AG04449 (cell line): ENCODE measurements at regions of chr11 and their contacts with region 1.

Region 1: GRCh38 chr11:101456812-101457211 is 127.0 kb downstream of the TRPC6 start:
- DNase-seq: no peak
- H3K4me3 ChIP-seq: no peak overlapping the region
- CTCF ChIP-seq: no peak

Region 2: DNA sequence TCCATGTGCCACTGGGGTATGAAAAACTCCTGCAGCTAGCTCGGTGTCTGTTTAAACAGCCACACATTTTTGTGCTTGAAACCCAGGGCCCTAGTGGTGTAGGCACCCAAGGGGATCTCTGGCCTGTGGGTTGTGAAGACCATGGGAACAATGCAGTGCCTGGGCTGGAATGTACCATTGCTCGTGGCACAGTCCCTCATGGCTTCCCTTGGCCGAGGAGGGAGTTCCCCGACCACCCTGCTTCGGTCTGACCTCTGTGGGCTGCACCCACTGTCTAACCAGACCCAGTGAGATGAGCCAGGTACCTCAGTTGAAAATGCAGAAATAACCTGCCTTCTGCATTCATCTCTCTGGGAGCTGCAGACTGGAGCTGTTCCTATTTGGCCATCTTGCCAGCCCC is 87.0 kb before region 1 on chr11:
- CTCF ChIA-PET with region 1: no interaction called
- POLR2A ChIA-PET with region 1: no interaction called
- DNase-seq: no peak
- H3K4me3 ChIP-seq: no peak overlapping the region
- CTCF ChIP-seq: no peak

Region 3: GRCh38 chr11:101436511-101437142 is 20.2 kb before region 1 on chr11:
- CTCF ChIA-PET with region 1: interaction called, 15 read pairs
- POLR2A ChIA-PET with region 1: no interaction called
- DNase-seq: no peak
- H3K4me3 ChIP-seq: no peak overlapping the region
- CTCF ChIP-seq: peak; percentile 71

Region 4: GRCh38 chr11:101444164-101444563 is 12.6 kb before region 1 on chr11:
- CTCF ChIA-PET with region 1: interaction called, 29 read pairs
- POLR2A ChIA-PET with region 1: no interaction called
- DNase-seq: no peak
- H3K4me3 ChIP-seq: no peak overlapping the region
- CTCF ChIP-seq: no peak

Region 5: GRCh38 chr11:101848262-101848661 is 391.4 kb after region 1 on chr11:
- CTCF ChIA-PET with region 1: interaction called, 118 read pairs
- POLR2A ChIA-PET with region 1: no interaction called
- DNase-seq: no peak
- H3K4me3 ChIP-seq: no peak overlapping the region
- CTCF ChIP-seq: no peak